PC-3 (cell line): ENCODE measurements at regions of chr1 and their contacts with region 1.

Region 1: DNA sequence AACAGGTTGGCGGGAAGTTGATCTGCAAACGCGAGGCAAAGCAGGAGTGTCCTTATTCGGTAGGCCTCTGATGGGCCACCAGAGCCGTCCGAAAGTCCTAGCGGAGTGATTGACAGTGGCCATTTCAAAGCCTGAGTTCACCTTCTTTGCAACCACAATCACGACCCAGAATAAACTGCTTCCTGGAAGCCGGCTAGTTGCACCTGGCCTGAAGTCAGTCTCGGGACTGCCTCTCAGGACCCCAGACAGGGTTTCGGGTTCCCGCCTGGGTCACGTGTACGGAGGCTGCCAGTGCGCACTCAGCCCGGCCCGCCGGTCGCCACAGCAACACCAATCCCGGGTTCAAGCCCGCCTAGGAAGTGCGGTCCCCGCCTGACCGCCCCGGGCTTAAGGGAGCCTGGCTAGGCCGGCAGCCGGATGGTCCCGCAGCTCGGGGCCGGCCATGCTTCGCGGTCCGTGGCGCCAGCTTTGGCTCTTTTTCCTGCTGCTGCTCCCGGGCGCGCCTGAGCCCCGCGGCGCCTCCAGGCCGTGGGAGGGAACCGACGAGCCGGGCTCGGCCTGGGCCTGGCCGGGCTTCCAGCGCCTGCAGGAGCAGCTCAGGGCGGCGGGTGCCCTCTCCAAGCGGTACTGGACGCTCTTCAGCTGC is at the start of gene TOR3A:
- DNase-seq: peak; percentile 83
- ATAC-seq: peak; percentile 86
- H3K4me3 ChIP-seq: peak within 1 kb of the TSS; percentile 84
- H3K27ac ChIP-seq: peak within 1 kb of the TSS; percentile 41
- H3K4me1 ChIP-seq: peaks cover 24% of the 10 kb centered on the region
- H3K27me3 ChIP-seq: no peaks in the 10 kb centered on the region
- CTCF ChIP-seq: no peak
- total RNA-seq, gene TOR3A: 70.8 and 95.5 TPM in 2 replicates

Region 2: GRCh38 chr1:179034720-179035119 is 47.1 kb before region 1 on chr1:
- CTCF ChIA-PET with region 1: no interaction called
- POLR2A ChIA-PET with region 1: no interaction called
- intact Hi-C with region 1: loop called (anchors 2 kb)
- DNase-seq: peak; percentile 48
- ATAC-seq: peak; percentile 34
- H3K4me3 ChIP-seq: no peak overlapping the region; the same call in 1 of the 2 replicates
- H3K27ac ChIP-seq: peak overlapping the region; percentile 55
- H3K4me1 ChIP-seq: peaks cover 76% of the 10 kb centered on the region
- H3K27me3 ChIP-seq: no peaks in the 10 kb centered on the region
- CTCF ChIP-seq: no peak

Region 3: DNA sequence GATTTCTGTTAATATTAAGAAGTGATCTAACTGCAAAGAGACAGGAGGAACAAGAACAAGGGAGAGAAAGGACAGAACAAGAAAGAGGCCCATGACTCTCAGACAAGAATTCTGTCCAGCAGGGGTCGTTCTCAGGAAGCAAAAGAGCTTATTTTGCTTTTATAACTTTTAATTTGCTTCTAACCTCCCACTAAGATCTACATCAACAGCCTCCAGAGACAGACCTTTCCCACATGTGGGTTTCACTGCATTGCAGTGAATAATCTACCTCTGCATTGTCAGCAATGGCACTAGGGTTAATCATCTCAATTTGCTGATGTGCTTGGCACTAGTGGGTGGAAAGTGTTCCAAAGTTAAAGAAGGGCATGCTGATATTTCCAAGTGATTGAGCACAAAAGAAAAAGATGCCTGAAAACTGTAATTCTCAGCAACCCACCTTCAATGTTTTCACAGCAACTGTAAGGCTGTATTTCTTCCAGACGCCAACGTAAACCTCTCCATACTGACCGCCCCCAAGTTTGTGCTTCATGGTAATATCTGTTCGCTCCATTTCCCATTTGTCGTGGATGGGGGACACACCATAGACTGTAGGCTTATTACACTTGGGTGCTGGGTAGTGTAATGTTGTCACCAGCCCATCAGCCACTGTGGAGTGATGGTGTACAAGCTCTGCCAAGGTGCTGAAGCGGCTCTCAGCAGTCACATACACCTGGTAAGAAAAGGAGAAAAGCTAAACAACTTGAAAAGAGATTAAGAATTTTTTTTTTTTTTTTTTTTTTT is 39.5 kb after region 1 on chr1:
- CTCF ChIA-PET with region 1: no interaction called
- POLR2A ChIA-PET with region 1: no interaction called
- intact Hi-C with region 1: loop called (anchors 2 kb)
- DNase-seq: peak; percentile 68
- ATAC-seq: peak; percentile 12; the same call in 1 of the 2 replicates
- H3K4me3 ChIP-seq: no peak overlapping the region
- H3K27ac ChIP-seq: 0 out of 2 replicates have a peak overlapping the region, but pooled peaks have one; percentile 27
- H3K4me1 ChIP-seq: peaks cover 23% of the 10 kb centered on the region
- H3K27me3 ChIP-seq: no peaks in the 10 kb centered on the region
- CTCF ChIP-seq: peak; percentile 73

Region 4: GRCh38 chr1:179194068-179194537 is 112.3 kb after region 1 on chr1:
- CTCF ChIA-PET with region 1: no interaction called
- POLR2A ChIA-PET with region 1: interaction called, 5 read pairs
- intact Hi-C with region 1: loop called (anchors 2 kb)
- DNase-seq: no peak
- ATAC-seq: no peak
- H3K4me3 ChIP-seq: no peak overlapping the region
- H3K27ac ChIP-seq: no peak overlapping the region
- H3K4me1 ChIP-seq: peaks cover 8% of the 10 kb centered on the region; the same call in 1 of the 2 replicates
- H3K27me3 ChIP-seq: no peaks in the 10 kb centered on the region
- CTCF ChIP-seq: no peak

Region 5: DNA sequence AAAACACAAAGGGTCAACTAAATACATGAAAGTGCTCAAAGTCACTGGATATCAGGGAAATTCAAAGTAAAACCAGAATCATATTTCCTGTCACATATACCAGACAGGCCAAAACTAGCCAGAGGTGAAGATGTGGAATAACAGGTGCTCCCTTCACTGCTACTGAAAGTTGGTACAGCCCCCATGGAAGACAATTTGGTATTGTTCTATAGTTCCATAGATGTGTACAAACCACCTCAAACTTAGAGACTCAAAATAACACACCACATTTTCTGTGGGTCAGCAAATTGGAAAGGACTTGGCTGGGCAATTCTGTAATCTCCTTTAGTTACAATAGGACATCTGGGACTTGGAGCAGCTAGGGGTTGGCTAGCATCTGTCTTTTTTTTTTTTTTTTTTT is 187.3 kb after region 1 on chr1:
- CTCF ChIA-PET with region 1: no interaction called
- POLR2A ChIA-PET with region 1: no interaction called
- intact Hi-C with region 1: no loop called
- DNase-seq: no peak
- ATAC-seq: no peak
- H3K4me3 ChIP-seq: no peak overlapping the region
- H3K27ac ChIP-seq: no peak overlapping the region
- H3K4me1 ChIP-seq: no peaks in the 10 kb centered on the region
- H3K27me3 ChIP-seq: no peaks in the 10 kb centered on the region
- CTCF ChIP-seq: no peak

Region 6: GRCh38 chr1:179365320-179366092 is 283.7 kb after region 1 on chr1 and contains the start of gene AXDND1:
- CTCF ChIA-PET with region 1: no interaction called
- POLR2A ChIA-PET with region 1: no interaction called
- intact Hi-C with region 1: loop called (anchors 5 kb)
- DNase-seq: peak; percentile 65
- ATAC-seq: peak; percentile 93
- H3K4me3 ChIP-seq: peak within 1 kb of the TSS; percentile 92
- H3K27ac ChIP-seq: peak within 1 kb of the TSS; percentile 84
- H3K4me1 ChIP-seq: 0 out of 2 replicates have a peak, but pooled peaks cover 4% of the 10 kb centered on the region
- H3K27me3 ChIP-seq: no peaks in the 10 kb centered on the region
- CTCF ChIP-seq: peak; percentile 33; the same call in 1 of the 2 replicates
- total RNA-seq, gene AXDND1: not detected in 2 replicates